Ascending aorta (tissue), 2 donors: ENCODE measurements at regions of chrX and their contacts with region 1.

Region 1: DNA sequence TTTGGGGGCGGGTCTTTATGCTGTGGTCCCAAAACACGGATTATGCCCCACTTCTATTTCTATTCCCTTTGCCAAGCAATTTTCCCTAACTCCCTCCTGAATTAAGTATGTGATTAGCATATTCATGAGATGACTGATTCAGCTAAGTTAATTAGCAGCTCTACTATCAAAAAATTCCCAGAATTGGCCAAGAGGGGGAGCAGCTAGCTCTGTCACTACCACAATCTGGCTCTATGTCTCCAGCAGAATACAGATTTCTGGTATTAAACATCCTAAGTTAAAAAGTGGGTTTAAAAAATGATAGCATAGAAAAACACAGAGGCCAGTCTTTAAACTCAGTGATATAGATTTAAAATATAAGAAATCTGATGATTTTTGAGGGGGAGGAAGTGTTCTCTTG is 80.3 kb downstream of the GPC4 start:
- DNase-seq: no peak
- H3K4me3 ChIP-seq: no peak overlapping the region
- H3K27ac ChIP-seq: no peak overlapping the region
- H3K4me1 ChIP-seq: no peaks in the 10 kb centered on the region
- H3K27me3 ChIP-seq: no peaks in the 10 kb centered on the region
- CTCF ChIP-seq: peak in 2 of 3 experiments; percentile 55 to 57

Region 2: GRCh38 chrX:133085785-133086184 is 249.2 kb before region 1 on chrX:
- intact Hi-C with region 1: no loop called
- DNase-seq: no peak
- H3K4me3 ChIP-seq: no peak overlapping the region
- H3K27ac ChIP-seq: no peak overlapping the region
- H3K4me1 ChIP-seq: no peaks in the 10 kb centered on the region
- H3K27me3 ChIP-seq: no peaks in the 10 kb centered on the region
- CTCF ChIP-seq: no peak

Region 3: DNA sequence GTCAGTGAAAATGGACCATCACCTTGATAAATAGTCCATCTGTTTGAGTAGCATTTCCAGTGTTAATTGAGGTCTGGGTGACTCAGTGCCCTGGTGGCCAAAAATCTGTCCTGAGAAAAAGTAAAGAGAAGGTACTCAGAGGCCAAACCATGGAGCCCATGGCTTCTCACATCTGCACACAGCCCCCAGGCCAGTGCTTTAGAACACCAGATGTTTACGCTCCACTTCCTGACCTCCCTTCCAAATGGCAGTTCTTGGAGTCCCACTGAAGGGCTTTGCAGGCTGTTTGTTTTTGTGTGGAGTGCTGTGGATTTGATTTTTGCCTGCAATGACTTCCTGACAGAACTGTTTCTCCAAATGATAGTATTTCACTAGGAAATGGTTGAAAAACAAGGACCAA is 140.5 kb after region 1 on chrX:
- intact Hi-C with region 1: loop called (anchors 5 kb)
- DNase-seq: no peak
- H3K4me3 ChIP-seq: no peak overlapping the region
- H3K27ac ChIP-seq: peak overlapping the region; percentile 65 to 66
- H3K4me1 ChIP-seq: no peaks in the 10 kb centered on the region
- H3K27me3 ChIP-seq: no peaks in the 10 kb centered on the region
- CTCF ChIP-seq: no peak

Region 4: DNA sequence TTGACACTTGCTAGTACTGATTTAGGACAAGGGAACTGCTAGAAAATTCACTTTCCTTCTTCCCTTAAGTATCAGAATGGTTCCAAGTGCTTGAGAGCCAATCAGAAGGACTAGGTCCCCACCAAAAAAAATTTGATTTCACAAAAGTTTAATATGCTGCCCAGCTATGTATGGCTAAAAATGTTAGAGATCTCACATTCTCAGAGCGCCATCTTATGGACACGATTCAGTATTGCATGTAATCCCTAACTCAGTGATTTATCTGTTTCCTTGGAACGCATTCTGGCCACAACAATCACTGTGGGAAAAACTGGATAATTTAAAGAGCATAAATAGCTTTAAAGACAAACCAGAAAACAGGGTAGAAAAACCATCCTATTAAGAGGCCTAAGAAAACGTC is 335.4 kb after region 1 on chrX:
- intact Hi-C with region 1: loop called (anchors 2 kb)
- DNase-seq: no peak
- H3K4me3 ChIP-seq: no peak overlapping the region
- H3K27ac ChIP-seq: no peak overlapping the region
- H3K4me1 ChIP-seq: no peaks in the 10 kb centered on the region
- H3K27me3 ChIP-seq: no peaks in the 10 kb centered on the region
- CTCF ChIP-seq: peak; percentile 51 to 76 (median 65)